Activated CD4-positive, alpha-beta T cell treated with anti-CD3 and anti-CD28 coated beads, Interleukin-2, amount 10 ng/mL, durations not matched to agents 7 days and 5 days (primary cell): ENCODE measurements at regions of chr5 and their contacts with region 1.

Region 1: GRCh38 chr5:157354800-157355199 is 88.9 kb downstream of the CYFIP2 start:
- DNase-seq: no peak
- H3K4me3 Mint-ChIP-seq: no peak overlapping the region
- H3K27ac Mint-ChIP-seq: no peak overlapping the region
- H3K4me1 Mint-ChIP-seq: peaks cover 18% of the 10 kb centered on the region
- H3K27me3 Mint-ChIP-seq: no peaks in the 10 kb centered on the region

Region 2: GRCh38 chr5:156850206-156850751 is 504.5 kb before region 1 on chr5 and contains the start of gene PPP1R2B:
- CTCF ChIA-PET with region 1: no interaction called
- POLR2A ChIA-PET with region 1: no interaction called
- DNase-seq: no peak
- H3K4me3 Mint-ChIP-seq: no peak within 1 kb of the TSS
- H3K27ac Mint-ChIP-seq: no peak within 1 kb of the TSS
- H3K4me1 Mint-ChIP-seq: no peaks in the 10 kb centered on the region
- H3K27me3 Mint-ChIP-seq: peaks cover 59% of the 10 kb centered on the region
- total RNA-seq, gene PPP1R2B: 0.17 TPM in 1 of 2 experiments, not detected in the other

Region 3: GRCh38 chr5:157328277-157328912 is 26.4 kb before region 1 on chr5:
- CTCF ChIA-PET with region 1: interaction called, 10 read pairs
- POLR2A ChIA-PET with region 1: no interaction called
- DNase-seq: peak; percentile 68
- H3K4me3 Mint-ChIP-seq: no peak overlapping the region
- H3K27ac Mint-ChIP-seq: peak overlapping the region; percentile 82
- H3K4me1 Mint-ChIP-seq: peaks cover 34% of the 10 kb centered on the region
- H3K27me3 Mint-ChIP-seq: no peaks in the 10 kb centered on the region

Region 4: DNA sequence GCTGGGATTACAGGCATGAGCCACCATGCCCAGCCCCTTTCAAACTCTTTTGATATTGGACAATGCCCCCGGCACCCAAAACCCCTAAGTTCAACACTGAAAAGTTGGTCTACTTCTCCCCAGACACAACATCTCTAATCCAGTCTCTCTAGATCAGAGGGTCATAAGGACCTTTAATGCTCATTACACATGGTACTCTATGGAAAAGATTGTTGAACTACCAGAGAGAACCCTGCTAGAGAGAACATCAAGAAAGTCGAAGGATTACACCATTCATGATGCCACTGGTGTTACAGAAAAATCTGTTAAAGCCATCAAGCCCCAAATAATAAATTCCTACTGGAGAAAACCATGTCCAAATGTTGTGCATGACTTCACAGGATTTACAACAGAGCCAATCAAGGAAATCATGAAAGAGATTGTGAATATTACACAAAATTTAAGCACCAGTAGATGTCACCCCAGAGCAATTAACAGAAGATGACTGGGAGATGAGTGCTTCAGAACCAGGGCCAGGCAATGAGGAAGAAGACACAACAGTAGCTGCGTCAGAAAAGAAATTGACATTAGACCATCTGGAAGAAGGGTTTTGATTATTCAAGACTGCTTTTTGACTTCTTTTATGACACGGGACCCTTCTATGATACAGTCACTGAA is 76.9 kb after region 1 on chr5:
- CTCF ChIA-PET with region 1: no interaction called
- POLR2A ChIA-PET with region 1: no interaction called
- DNase-seq: peak; percentile 66
- H3K4me3 Mint-ChIP-seq: no peak overlapping the region
- H3K27ac Mint-ChIP-seq: no peak overlapping the region
- H3K4me1 Mint-ChIP-seq: peaks cover 9% of the 10 kb centered on the region
- H3K27me3 Mint-ChIP-seq: peaks cover 20% of the 10 kb centered on the region